ENCODE measurements at regions of chr10 and their contacts with region 1.

Region 1: DNA sequence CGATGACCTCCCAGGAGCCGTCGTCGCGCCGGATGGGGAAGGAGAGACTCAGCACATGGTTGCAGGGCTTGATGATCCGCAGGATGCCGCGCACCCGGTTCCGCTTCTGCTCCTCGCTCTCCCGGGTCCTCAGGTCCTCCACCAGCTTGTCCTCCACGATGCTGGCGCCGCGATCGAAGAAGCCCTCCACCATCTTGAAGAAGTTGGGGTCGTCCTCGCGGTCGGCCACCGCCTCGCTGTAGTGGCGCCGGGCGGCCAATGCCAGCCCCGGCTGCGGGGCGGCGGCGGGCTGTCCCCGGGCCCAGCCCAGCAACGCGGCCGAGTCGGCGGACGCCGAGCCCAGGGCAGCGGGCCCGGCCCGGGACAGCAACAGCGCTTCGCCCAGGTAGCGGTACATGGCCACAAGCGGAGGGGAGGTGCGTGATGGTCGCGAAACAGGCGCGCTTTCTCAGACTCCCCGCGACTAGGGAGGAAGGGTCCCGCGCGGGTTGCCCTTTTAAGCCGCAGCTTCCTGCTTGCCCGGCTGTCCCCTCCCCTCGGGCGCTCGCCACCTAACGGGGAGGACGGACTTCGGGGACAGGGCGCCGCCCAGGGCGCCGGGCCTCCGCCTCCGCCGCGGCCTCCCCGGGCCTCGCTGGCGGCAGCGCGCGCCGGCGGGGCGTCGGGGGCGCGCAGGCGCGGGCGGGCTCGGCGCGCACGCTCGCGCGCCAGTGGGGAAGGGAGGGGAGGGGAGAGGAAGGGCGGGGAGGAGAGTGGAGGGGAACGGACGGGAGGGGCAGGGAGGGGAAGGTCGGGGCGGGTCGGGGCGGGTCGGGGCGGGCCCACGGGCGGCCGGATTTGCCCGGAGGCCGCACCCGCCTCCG is at the starts of genes GLUD1 and SHLD2:
- DNase-seq: peak; percentile 98
- H3K4me3 Mint-ChIP-seq: peak within 1 kb of the TSS; percentile 96
- H3K27ac Mint-ChIP-seq: peak within 1 kb of the TSS; percentile 97
- H3K4me1 Mint-ChIP-seq: peaks cover 40% of the 10 kb centered on the region
- H3K27me3 Mint-ChIP-seq: no peaks in the 10 kb centered on the region
- total RNA-seq, gene GLUD1: 112 and 114 TPM in 2 replicates
- total RNA-seq, gene SHLD2: 38.9 and 42.2 TPM in 2 replicates

Region 2: DNA sequence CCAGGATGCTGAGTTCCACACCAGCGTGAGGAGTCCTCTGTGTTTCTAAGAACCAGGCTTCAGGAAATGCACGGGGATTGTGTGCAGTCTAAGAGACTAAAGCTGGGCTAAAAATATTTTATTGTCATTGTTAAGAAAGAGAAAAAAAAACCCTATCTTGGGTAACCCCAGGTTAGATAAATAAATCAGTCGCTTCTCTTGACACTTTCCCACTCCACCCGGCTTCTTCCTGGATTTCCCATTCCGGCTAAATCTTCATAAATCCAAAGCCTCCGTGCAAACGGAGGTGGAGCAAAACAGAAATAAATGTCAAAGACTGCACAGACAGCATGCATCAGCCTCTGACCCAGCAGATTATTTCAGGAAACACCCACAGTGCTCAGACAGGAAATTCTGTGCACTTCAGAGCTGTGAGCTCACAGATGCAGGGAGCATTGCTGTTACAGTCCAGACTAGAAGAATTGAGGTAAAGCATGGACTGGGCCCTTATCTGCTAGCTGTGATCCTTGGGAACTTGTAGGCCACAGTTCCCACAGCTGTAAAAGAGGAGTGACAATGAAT is 683.2 kb before region 1 on chr10:
- intact Hi-C with region 1: loop called (anchors 10 kb)
- DNase-seq: peak; percentile 83
- H3K4me3 Mint-ChIP-seq: peak overlapping the region; percentile 78
- H3K27ac Mint-ChIP-seq: peak overlapping the region; percentile 92
- H3K4me1 Mint-ChIP-seq: peaks cover 36% of the 10 kb centered on the region
- H3K27me3 Mint-ChIP-seq: no peaks in the 10 kb centered on the region

Region 3: DNA sequence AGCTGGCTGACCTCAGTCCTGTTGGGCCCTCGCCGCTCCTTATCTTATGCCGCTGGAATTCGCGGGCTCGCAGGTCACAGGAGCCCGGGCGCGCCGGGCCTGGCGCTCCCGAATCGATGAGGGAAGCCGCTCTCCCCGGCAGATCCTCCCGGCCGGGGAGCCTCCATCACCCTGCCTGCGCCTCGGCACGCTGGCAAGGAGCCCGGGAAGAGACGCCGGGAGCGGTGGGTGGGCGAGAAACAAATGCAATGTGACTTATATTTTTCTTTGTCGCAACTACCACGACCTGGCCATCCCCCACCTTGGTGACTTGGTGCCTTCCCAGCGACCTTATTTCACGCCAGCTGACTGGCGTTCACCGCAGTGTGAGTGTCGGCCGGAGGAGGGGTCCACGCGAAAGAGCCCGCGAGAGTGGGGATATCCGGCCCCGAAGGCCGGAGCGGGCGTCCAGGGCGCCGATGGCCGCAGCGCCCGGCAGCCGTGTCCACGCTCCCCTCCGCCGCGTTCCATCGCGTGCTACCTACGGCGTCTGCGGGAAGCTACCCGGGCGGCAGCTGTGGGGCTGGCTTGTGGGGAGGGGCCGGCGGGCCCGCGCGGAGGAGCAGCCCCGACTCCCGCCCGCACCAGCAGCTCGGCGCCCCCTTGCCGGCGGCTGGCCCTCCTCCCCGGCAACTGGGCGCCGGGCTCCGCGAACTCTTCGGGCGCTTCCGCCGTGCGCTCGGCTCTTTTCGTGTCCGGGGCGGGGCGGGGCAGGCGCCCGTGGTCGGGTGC is 338.7 kb before region 1 on chr10:
- intact Hi-C with region 1: loop called (anchors 2 kb)
- DNase-seq: peak; percentile 97
- H3K4me3 Mint-ChIP-seq: peak overlapping the region; percentile 85
- H3K27ac Mint-ChIP-seq: peak overlapping the region; percentile 86
- H3K4me1 Mint-ChIP-seq: peaks cover 40% of the 10 kb centered on the region
- H3K27me3 Mint-ChIP-seq: peaks cover 36% of the 10 kb centered on the region

Region 4: GRCh38 chr10:86936661-86937501 is 157.7 kb before region 1 on chr10:
- intact Hi-C with region 1: loop called (anchors 1 kb)
- DNase-seq: peak; percentile 54
- H3K4me3 Mint-ChIP-seq: no peak overlapping the region
- H3K27ac Mint-ChIP-seq: no peak overlapping the region
- H3K4me1 Mint-ChIP-seq: peaks cover 2% of the 10 kb centered on the region
- H3K27me3 Mint-ChIP-seq: peaks cover 4% of the 10 kb centered on the region

Region 5: DNA sequence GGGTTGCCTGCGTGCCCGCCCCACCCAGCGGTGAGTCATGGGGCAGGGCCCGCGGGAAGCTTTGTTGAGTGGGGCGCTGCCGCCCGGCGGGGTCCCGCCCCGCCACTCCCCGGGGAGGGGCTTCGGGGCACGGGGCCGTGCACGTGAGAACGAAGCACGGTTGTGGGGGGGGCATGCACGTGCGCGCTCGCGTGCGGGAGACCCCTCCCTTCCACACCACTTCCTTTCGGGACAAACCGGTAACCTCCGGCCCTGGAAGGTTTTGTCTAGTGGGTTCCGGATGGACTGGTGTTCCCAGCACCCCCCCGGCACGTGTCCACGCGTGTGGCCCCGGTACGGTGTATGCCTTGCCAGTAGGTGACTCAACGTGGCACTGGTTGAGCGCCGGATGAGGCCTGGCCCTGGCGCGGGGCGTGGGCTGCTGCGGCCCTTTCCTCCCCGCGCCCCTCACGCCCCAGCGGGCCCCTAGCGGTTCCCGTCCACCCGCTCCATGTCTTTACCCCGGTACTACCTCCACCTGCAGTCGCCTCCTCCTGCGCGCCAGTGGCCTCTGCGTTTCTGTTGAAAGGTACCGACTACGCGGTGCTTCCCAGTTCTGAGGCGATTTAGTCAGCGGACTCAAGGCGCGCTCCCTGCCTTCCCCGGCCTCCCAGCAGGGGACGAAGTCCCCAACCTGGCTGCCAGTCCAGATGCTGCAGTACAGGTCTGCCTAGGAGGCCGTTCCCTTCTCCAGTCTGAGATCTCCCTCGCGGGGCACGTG is 123.2 kb before region 1 on chr10:
- intact Hi-C with region 1: loop called (anchors 2 kb)
- DNase-seq: peak; percentile 95
- H3K4me3 Mint-ChIP-seq: peak overlapping the region; percentile 83
- H3K27ac Mint-ChIP-seq: peak overlapping the region; percentile 89
- H3K4me1 Mint-ChIP-seq: peaks cover 13% of the 10 kb centered on the region
- H3K27me3 Mint-ChIP-seq: peaks cover 35% of the 10 kb centered on the region

Region 6: GRCh38 chr10:87079106-87079836 is 15.3 kb before region 1 on chr10:
- intact Hi-C with region 1: loop called (anchors 1 kb)
- DNase-seq: no peak
- H3K4me3 Mint-ChIP-seq: no peak overlapping the region
- H3K27ac Mint-ChIP-seq: no peak overlapping the region
- H3K4me1 Mint-ChIP-seq: peaks cover 24% of the 10 kb centered on the region
- H3K27me3 Mint-ChIP-seq: no peaks in the 10 kb centered on the region

Region 7: DNA sequence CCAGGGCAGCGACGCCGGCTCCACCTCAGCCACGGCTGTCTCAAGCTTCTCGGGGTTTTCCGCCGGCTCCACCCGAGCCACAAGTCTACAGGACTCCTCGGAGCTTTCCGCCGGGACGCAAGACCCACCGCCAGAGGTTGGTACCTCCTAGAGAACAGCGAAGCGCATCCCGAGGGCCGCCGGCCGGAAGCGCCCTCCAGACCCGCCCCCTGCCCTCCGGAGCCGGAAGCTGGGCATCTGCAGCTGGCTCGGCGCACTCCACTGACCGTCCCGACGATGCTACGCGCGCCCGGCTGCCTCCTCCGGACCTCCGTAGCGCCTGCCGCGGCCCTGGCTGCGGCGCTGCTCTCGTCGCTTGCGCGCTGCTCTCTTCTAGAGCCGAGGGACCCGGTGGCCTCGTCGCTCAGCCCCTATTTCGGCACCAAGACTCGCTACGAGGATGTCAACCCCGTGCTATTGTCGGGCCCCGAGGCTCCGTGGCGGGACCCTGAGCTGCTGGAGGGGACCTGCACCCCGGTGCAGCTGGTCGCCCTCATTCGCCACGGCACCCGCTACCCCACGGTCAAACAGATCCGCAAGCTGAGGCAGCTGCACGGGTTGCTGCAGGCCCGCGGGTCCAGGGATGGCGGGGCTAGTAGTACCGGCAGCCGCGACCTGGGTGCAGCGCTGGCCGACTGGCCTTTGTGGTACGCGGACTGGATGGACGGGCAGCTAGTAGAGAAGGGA is 410.2 kb after region 1 on chr10 and contains the start of gene MINPP1:
- intact Hi-C with region 1: loop called (anchors 5 kb)
- DNase-seq: peak; percentile 92
- H3K4me3 Mint-ChIP-seq: peak within 1 kb of the TSS; percentile 90
- H3K27ac Mint-ChIP-seq: peak within 1 kb of the TSS; percentile 85
- H3K4me1 Mint-ChIP-seq: peaks cover 28% of the 10 kb centered on the region
- H3K27me3 Mint-ChIP-seq: peaks cover 14% of the 10 kb centered on the region
- total RNA-seq, gene MINPP1: 9.4 and 9.6 TPM in 2 replicates